ENCODE measurements at regions of chr5 and their contacts with region 1.

Region 1: DNA sequence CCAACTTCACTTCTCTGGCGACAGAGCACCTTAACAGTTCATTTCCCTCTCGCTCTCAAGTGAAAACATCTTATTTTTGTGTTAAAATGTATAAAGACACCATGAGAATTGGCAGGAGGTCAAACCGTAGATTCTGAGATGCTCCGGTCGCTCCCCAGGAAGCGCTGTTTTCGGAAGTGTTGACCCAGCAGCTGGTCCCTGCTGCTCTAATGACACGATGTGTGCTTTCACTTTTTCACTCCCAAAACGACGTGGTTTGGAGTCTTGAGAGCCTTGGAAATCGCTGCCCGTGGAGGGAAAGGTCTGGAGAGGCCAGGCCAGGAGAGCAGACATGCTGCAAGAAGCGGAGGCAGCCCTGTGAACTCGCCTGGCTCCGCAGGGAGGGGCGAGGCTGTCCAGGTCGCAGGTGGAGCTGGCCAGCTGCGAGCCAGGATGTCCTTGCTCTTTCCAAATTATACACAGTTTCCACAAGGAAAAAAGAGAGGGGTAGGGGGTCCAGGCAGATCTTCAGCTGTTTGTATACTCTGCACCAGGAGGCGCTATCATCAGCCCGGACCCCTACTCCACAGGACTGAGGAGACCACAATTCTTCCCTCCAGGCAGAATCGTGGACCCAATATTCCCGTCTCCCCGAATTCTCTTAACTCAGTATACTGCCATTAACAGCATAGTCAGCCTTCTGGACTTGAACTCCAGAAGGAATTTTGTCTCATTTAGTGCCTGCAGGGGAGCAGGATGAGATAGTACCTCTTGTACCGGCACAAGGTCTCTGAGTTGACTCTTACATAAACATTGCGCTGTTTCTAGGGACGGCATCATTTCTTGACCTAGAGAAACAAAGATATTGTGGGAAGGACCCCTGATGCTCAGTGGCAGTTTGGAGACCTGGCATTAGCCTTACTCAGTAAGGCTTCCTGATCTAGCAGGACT is 248.6 kb upstream of the ANKRD55 start:
- DNase-seq: peak; percentile 5
- H3K4me3 Mint-ChIP-seq: peak overlapping the region; percentile 83
- H3K27ac Mint-ChIP-seq: peak overlapping the region; percentile 77
- H3K4me1 Mint-ChIP-seq: peaks cover 32% of the 10 kb centered on the region
- H3K27me3 Mint-ChIP-seq: no peaks in the 10 kb centered on the region

Region 2: DNA sequence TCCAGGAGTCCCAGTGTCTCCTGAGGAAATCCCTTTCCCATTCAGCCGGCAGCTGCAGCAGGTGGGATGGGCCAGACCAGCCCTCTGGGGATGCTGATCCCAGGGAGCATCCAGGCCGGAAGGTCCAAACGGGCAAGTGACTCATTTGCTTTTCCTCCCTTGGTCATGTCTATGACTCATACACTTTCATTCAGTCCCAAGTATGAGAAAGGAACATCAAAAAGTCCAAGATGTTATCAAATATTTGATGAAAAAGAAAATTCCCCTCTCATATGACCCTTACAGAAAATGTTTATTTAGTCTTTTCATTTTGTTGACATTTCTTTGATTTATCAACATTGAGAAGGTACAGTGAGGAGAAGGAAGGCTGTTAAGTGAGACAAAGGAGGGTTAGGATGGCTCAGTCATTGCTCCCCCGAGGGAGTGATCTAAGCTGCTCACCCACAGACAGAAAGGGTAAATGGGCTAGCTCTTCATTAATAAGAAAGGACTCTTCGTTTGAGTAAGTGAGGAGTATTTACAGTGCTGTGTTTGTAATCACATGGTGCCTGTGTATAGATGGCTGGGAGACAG is 131.0 kb before region 1 on chr5:
- intact Hi-C with region 1: loop called (anchors 5 kb)
- DNase-seq: no peak
- H3K4me3 Mint-ChIP-seq: no peak overlapping the region
- H3K27ac Mint-ChIP-seq: no peak overlapping the region
- H3K4me1 Mint-ChIP-seq: peaks cover 23% of the 10 kb centered on the region
- H3K27me3 Mint-ChIP-seq: peaks cover 2% of the 10 kb centered on the region

Region 3: GRCh38 chr5:56588636-56589480 is 107.2 kb after region 1 on chr5:
- intact Hi-C with region 1: loop called (anchors 5 kb)
- DNase-seq: peak; percentile 65
- H3K4me3 Mint-ChIP-seq: peak overlapping the region; percentile 19
- H3K27ac Mint-ChIP-seq: peak overlapping the region; percentile 78
- H3K4me1 Mint-ChIP-seq: peaks cover 50% of the 10 kb centered on the region
- H3K27me3 Mint-ChIP-seq: peaks cover 7% of the 10 kb centered on the region

Region 4: DNA sequence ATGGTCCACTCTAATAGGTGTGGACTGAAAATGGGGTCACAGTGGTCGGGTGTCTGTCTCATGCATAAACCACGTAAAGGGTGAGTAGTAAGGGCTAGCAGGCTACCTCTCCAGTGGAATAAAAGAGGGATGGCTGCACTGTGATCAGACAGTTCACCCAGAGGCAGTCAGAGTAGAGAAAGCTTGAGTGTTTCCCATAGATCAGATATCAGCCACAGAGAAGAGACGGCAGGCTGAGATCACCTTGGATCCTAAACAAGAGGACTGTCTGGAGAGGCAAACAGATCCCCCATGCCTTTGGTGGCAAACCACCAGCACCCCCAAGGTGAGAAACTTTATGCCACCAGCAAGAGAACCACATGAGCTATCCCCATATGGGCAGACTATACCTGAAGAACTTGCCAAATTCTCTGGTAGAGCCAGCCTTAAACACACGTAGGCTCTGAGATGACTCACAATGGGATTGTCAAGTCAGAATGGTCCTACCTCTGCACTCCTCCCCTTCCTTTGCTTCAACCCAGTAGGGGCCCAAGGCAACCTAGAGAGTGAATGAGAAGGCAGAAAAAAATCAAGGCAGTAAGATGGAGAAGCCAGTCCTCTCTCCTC is 128.5 kb after region 1 on chr5:
- intact Hi-C with region 1: loop called (anchors 1 kb)
- DNase-seq: peak; percentile 49
- H3K4me3 Mint-ChIP-seq: peak overlapping the region; percentile 48
- H3K27ac Mint-ChIP-seq: peak overlapping the region; percentile 81
- H3K4me1 Mint-ChIP-seq: peaks cover 89% of the 10 kb centered on the region
- H3K27me3 Mint-ChIP-seq: peaks cover 3% of the 10 kb centered on the region

Region 5: GRCh38 chr5:56710826-56711590 is 229.3 kb after region 1 on chr5:
- intact Hi-C with region 1: loop called (anchors 5 kb)
- DNase-seq: no peak
- H3K4me3 Mint-ChIP-seq: no peak overlapping the region
- H3K27ac Mint-ChIP-seq: no peak overlapping the region
- H3K4me1 Mint-ChIP-seq: peaks cover 29% of the 10 kb centered on the region
- H3K27me3 Mint-ChIP-seq: peaks cover 9% of the 10 kb centered on the region

Region 6: DNA sequence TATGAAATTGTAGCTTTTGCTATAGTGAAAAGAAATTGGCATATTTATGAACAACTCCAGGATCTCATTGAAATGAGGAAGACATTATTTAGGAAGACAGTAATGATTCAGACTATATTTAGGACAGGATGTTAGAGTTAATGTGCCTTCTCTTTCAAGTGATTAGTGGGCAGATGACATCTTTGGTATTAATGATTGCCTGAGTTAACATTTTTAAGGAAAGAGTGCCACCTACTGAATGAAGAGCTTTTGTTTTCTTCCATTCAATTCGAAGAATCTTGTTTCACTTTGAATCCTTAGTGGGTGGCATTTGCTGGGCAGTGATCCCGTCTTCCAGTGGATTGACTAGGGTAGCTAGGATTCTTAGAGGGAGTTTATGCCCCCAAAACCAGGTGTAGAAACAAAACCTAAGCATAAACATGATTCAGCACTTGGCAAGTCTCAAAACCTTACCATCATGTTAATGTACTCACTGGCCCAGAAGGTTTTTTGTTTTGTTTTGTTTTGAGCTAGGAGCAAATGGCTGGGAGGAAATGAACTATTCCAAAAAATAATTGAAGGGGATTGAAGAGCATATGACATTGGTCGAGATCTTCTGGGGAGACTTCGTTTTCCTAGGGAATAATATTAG is 356.8 kb after region 1 on chr5:
- intact Hi-C with region 1: loop called (anchors 5 kb)
- DNase-seq: no peak
- H3K4me3 Mint-ChIP-seq: peak overlapping the region; percentile 25
- H3K27ac Mint-ChIP-seq: no peak overlapping the region
- H3K4me1 Mint-ChIP-seq: peaks cover 58% of the 10 kb centered on the region
- H3K27me3 Mint-ChIP-seq: no peaks in the 10 kb centered on the region